ENCODE measurements at regions of chr11 and their contacts with region 1.

Region 1: GRCh38 chr11:76207642-76208401 is 1.5 kb upstream of the WNT11 start:
- DNase-seq: peak; percentile 36
- ATAC-seq: peak; percentile 75
- H3K4me3 ChIP-seq: peak overlapping the region; percentile 49 to 93
- H3K27ac ChIP-seq: no peak overlapping the region
- H3K4me1 ChIP-seq: peaks cover 7% of the 10 kb centered on the region; the same call in 1 of the 2 replicates
- H3K27me3 ChIP-seq: peaks cover 10% of the 10 kb centered on the region; the same call in 1 of the 2 replicates
- CTCF ChIP-seq: peak; percentile 100

Region 2: DNA sequence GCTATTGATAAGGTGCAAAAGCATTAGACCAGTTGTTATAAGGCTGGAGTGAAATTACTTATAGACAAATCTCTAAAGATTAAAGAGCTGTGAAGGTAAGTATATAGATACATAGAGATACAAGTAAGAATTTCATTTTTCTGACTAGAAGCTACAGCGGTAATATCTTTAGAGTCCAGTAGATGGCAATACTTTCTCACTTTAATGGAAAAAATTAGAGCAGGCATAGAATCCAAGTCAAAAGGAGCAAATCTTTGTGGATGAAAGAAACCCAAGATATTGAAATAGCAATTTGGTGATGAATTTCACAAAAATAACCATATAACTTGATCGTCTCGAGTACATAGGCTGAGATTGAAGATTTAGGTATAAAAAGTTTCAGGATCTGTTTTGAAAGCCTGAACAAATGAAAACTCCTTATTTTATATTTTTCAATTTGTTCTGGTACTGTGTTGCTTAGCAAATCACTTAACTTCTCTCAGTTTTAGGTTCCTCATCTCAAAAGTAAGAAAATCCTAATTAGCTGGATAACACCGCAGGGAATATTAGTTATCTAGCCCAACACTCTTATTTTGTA is 310.9 kb before region 1 on chr11:
- CTCF ChIA-PET with region 1: interaction called, 16 read pairs
- POLR2A ChIA-PET with region 1: no interaction called
- in situ Hi-C with region 1: no loop called
- intact Hi-C with region 1: loop called (anchors 5 kb)
- DNase-seq: peak; percentile 30
- ATAC-seq: peak; percentile 60; the same call in 1 of the 2 replicates
- H3K4me3 ChIP-seq: no peak overlapping the region
- H3K27ac ChIP-seq: no peak overlapping the region
- H3K4me1 ChIP-seq: no peaks in the 10 kb centered on the region
- H3K27me3 ChIP-seq: no peaks in the 10 kb centered on the region
- CTCF ChIP-seq: peak; percentile 77; the same call in 1 of the 2 replicates

Region 3: DNA sequence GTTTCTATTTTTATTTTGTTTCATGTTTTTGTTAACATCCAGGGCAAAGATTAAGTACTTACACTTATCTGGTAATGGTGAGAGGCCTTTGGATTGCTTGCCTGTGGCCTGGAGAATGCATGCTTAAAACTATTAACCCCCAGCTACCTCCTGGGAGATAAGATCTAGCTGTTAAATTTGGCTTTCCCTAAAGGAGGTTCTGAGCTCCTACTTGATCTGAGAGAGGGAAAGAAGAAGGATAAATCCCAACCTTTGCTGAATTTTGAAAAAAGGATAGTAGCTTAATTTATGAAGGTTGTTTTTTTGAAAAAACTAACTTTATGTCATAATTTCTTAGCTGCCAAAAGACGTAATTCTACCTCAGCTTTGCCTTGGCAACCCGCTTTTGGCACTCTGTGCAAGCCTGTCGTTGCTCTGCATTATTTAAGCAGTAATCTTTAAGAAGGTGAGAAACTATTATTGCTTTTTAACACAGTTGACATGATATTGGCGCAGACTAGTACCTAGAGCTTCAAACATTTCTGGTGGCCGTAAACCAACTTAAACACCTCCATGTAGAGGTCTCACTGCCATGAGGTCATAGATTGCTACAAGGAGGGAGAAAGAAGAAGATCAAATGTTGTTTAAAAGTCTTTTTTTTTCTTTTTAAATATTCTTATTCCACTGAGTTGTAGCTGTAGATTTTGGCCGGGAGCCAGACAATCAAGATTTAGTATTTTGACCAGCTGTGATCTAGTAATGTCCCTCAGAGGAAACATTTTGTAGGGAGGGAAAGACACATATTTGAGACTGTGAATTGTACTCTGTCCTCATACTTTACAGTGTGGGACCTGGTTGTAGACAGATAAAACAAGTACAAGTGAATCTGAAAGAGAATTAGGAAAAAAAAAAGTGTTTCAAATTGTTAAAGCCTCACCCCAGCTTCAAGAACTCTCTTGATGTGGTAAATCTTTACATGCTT is 75.9 kb before region 1 on chr11:
- CTCF ChIA-PET with region 1: interaction called, 10 read pairs
- POLR2A ChIA-PET with region 1: no interaction called
- in situ Hi-C with region 1: no loop called
- intact Hi-C with region 1: no loop called
- DNase-seq: no peak
- ATAC-seq: no peak
- H3K4me3 ChIP-seq: no peak overlapping the region
- H3K27ac ChIP-seq: no peak overlapping the region
- H3K4me1 ChIP-seq: 0 out of 2 replicates have a peak, but pooled peaks cover 6% of the 10 kb centered on the region
- H3K27me3 ChIP-seq: no peaks in the 10 kb centered on the region
- CTCF ChIP-seq: no peak

Region 4: GRCh38 chr11:76235233-76236091 is 27.6 kb after region 1 on chr11:
- CTCF ChIA-PET with region 1: interaction called, 16 read pairs
- POLR2A ChIA-PET with region 1: no interaction called
- in situ Hi-C with region 1: no loop called
- intact Hi-C with region 1: no loop called
- DNase-seq: peak; percentile 94
- ATAC-seq: peak; percentile 86
- H3K4me3 ChIP-seq: peak overlapping the region; percentile 86 to 88
- H3K27ac ChIP-seq: peak overlapping the region; percentile 74
- H3K4me1 ChIP-seq: peaks cover 15% of the 10 kb centered on the region; the same call in 1 of the 2 replicates
- H3K27me3 ChIP-seq: no peaks in the 10 kb centered on the region
- CTCF ChIP-seq: no peak

Region 5: GRCh38 chr11:76318744-76319384 is 111.0 kb after region 1 on chr11:
- CTCF ChIA-PET with region 1: interaction called, 27 read pairs
- POLR2A ChIA-PET with region 1: interaction called, 7 read pairs
- in situ Hi-C with region 1: no loop called
- intact Hi-C with region 1: loop called (anchors 1 kb)
- DNase-seq: peak; percentile 71
- ATAC-seq: peak; percentile 97
- H3K4me3 ChIP-seq: no peak overlapping the region
- H3K27ac ChIP-seq: no peak overlapping the region
- H3K4me1 ChIP-seq: no peaks in the 10 kb centered on the region
- H3K27me3 ChIP-seq: peaks cover 3% of the 10 kb centered on the region; the same call in 1 of the 2 replicates
- CTCF ChIP-seq: peak; percentile 96

Region 6: GRCh38 chr11:76392870-76393269 is 185.0 kb after region 1 on chr11:
- CTCF ChIA-PET with region 1: no interaction called
- POLR2A ChIA-PET with region 1: no interaction called
- in situ Hi-C with region 1: no loop called
- intact Hi-C with region 1: no loop called
- DNase-seq: no peak
- ATAC-seq: no peak
- H3K4me3 ChIP-seq: no peak overlapping the region
- H3K27ac ChIP-seq: no peak overlapping the region
- H3K4me1 ChIP-seq: no peaks in the 10 kb centered on the region
- H3K27me3 ChIP-seq: no peaks in the 10 kb centered on the region
- CTCF ChIP-seq: no peak

Region 7: DNA sequence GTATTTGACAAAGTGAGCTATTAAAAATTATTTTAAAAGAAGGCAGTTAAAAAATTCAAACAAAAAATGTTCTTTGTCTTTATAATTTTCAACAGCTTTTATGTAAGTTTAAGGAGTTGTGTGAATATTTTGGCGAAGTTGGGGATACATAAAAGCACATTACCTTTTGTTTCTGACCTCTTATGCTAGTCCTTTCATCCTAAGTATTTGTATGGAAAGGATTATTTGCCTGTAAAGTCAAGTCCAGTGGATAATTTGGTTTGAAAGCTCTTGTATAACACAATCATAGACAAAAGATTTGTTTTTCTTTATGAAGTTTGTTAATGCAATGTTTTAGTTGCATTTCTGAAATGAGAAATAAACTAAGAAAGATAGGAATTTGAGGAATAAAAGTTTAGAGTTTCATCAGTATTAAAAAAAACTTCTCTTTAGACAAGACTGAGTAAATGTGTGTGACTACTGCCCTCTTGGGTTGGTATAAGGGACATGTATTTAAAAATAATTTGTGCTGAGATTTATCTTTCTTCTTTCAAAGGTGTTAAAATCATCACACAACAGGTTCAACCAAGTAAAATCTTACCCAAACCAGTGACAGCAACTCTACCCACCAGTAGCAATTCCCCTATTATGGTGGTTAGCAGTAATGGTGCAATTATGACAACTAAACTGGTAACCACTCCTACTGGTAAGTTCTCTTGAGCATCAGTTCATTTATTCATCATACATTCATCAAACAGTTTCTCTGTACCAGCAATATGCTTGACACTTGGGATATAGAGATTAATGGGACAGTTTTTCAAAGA is 305.2 kb after region 1 on chr11:
- CTCF ChIA-PET with region 1: no interaction called
- POLR2A ChIA-PET with region 1: no interaction called
- in situ Hi-C with region 1: no loop called
- intact Hi-C with region 1: loop called (anchors 5 kb)
- DNase-seq: no peak
- ATAC-seq: no peak
- H3K4me3 ChIP-seq: no peak overlapping the region
- H3K27ac ChIP-seq: no peak overlapping the region
- H3K4me1 ChIP-seq: no peaks in the 10 kb centered on the region
- H3K27me3 ChIP-seq: no peaks in the 10 kb centered on the region
- CTCF ChIP-seq: peak; percentile 60; the same call in 1 of the 2 replicates

Region 8: DNA sequence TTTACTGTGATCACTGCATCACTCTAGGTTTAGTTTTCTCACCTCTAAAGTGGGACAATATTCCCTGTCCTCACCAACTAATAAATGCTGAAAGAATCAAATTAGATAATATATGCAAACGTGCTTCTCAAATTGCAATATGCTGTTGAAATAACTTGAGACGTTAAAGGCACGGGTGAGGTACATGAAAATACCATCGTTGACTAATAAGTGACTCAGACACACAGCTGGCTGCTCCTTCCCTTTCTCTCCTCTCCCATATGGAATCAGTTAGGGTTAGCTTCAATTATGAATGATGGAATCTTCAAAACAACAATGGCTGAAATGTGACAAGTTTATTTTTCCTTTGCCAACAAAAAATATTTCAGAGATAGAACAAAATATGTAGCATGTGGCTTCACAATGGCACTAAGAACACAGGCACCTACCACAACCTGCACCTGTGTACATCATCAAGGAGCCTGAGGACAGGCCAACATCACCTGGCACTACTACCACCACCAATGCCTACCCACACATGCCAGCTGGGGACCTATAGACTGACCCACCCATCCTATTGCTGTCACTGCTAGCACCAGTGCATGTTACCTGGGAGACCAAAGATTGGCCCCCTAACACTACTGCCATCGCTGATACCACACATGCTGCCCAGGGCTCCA is 1079.9 kb after region 1 on chr11:
- CTCF ChIA-PET with region 1: no interaction called
- POLR2A ChIA-PET with region 1: no interaction called
- in situ Hi-C with region 1: no loop called
- intact Hi-C with region 1: no loop called
- DNase-seq: peak; percentile 71
- ATAC-seq: peak; percentile 69
- H3K4me3 ChIP-seq: no peak overlapping the region
- H3K27ac ChIP-seq: no peak overlapping the region
- H3K4me1 ChIP-seq: no peaks in the 10 kb centered on the region
- H3K27me3 ChIP-seq: no peaks in the 10 kb centered on the region
- CTCF ChIP-seq: no peak

Measured in Panc1 (cell line).